PC-3 (cell line): ENCODE measurements at regions of chr3 and their contacts with region 1.

Region 1: DNA sequence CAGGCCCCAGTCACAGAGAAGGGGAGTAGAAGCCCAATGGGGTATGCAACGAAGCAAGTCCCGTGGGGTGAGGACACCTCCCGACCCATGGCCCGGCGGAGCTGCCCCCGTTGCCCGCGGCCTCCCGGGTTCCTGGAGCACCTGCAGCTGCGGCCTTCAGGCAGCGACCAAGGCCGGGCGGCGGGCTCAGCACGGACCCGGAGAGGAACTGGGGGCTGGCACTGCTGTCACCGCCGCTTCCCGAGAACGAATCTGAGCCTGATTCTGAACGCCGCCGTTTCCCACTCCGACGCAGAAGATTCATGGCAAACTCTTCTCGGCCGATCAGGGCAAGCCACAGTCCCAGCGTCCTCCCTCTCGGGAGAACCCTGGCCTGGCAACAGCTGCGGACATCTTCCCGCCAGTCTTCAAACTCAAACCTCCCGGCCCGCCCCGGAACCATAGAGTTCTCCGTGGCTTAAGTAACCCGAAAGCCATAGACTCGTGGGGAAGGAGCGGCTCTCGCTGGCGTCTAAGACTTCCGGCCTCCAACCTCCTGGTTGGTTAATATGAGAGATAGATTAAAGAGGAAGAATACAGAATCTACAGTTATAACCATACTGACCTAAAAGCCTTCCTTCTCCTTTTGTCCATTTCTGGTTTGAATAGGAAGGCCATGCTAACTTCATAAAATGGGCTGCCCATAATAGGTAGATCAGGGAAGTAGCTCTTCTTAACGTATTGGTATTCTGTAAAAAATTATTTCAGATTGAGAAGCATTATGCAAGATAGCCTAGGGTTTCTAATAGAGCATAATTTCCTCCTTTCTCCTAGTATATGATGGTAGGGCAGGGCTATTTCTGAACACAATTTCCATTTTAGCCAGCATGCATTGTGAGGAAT is at the start of gene POLQ:
- DNase-seq: peak; percentile 97
- ATAC-seq: peak; percentile 92
- H3K4me3 ChIP-seq: peak within 1 kb of the TSS; percentile 84
- H3K27ac ChIP-seq: no peak within 1 kb of the TSS
- H3K4me1 ChIP-seq: peaks cover 8% of the 10 kb centered on the region
- H3K27me3 ChIP-seq: no peaks in the 10 kb centered on the region
- CTCF ChIP-seq: no peak
- total RNA-seq, gene POLQ: 9.6 and 22.2 TPM in 2 replicates

Region 2: DNA sequence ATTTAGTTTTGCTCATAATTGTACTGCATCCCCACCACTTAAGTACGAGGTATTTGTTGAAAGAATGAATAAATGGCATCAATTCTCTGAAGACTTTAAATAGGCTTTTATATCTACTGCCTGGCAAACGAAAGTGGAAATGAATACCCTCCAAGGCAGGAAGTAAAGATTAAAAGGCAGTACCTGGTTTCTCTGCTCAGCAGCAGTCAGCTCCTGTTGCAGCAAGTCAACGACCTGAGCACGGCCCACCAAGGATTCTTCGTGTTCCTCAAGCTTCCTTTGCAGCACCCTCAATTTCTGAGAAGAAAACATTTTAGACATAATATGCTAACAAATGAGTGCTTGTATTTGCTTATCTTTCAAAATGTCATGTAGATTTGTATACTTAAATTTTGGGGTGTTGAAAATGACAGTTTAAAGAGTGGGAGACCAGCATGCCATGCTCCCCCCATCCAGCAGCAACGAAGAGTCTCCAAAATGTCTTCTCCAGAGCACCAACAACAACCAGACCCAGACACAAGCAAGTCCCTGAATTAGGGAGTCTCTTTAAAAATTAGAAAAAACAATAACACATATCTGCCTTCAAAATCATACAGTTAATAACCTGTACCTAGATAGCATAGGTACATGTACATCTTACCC is 172.5 kb after region 1 on chr3:
- CTCF ChIA-PET with region 1: no interaction called
- POLR2A ChIA-PET with region 1: no interaction called
- intact Hi-C with region 1: loop called (anchors 10 kb)
- DNase-seq: no peak
- ATAC-seq: no peak
- H3K4me3 ChIP-seq: no peak overlapping the region
- H3K27ac ChIP-seq: no peak overlapping the region
- H3K4me1 ChIP-seq: no peaks in the 10 kb centered on the region
- H3K27me3 ChIP-seq: no peaks in the 10 kb centered on the region
- CTCF ChIP-seq: no peak

Region 3: DNA sequence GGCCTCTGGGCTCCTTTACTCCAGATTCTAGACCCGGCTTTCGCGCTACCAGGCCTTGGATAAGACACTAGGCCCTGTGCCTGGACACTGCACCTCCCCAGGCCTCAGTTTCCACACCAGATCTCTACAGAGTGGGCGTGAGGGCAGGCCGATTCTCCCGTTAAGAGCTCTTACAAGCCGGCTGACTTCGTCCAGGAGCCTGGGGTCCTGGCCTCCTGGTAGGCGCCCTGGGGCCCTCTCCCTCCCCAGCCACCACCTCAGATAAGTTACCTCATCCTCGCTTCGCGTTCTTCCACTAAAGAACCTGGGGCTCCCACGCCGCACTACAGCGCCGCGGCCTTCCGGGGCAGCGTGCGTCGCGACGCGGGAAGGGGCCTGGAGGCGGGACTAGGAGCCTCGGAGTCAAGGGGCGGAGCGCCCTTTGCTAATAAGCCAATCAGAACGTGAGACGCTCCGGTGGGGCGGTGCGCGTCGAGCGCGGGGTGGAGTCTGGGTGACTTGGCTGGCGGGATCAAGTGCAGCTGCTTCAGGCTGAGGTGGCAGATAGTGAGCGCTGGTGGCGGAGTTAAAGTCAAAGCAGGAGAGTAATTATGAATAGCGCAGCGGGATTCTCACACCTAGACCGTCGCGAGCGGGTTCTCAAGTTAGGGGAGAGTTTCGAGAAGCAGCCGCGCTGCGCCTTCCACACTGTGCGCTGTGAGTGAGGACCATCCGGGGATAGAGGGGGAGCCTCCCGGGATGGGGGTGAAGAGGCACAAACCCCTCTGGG is 289.1 kb after region 1 on chr3 and contains the starts of genes EAF2 and IQCB1:
- CTCF ChIA-PET with region 1: no interaction called
- POLR2A ChIA-PET with region 1: no interaction called
- intact Hi-C with region 1: loop called (anchors 10 kb)
- DNase-seq: peak; percentile 99
- ATAC-seq: peak; percentile 99
- H3K4me3 ChIP-seq: peak within 1 kb of the TSS; percentile 81
- H3K27ac ChIP-seq: no peak within 1 kb of the TSS
- H3K4me1 ChIP-seq: peaks cover 16% of the 10 kb centered on the region
- H3K27me3 ChIP-seq: no peaks in the 10 kb centered on the region
- CTCF ChIP-seq: no peak
- total RNA-seq, gene EAF2: 2.8 and 8.6 TPM in 2 replicates
- total RNA-seq, gene IQCB1: 29.0 and 29.3 TPM in 2 replicates

Region 4: DNA sequence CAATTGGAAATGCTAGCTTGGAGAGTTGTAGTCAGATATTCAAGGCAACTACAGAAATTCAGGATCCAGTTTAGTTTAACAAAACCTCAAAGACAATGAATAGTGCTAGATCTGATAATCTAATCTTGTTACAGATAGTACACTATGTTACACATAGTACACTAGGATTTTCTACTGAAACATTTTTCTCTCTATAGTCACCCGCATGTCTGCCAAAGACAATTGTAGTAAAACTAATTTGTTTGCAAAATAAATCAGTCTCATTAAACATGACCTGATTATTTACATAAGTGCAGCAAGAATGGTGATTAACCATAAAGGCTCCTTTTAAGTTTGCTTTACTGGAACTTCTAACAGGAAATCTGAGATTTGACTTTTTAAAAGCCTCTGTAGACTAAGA is 424.2 kb after region 1 on chr3:
- CTCF ChIA-PET with region 1: no interaction called
- POLR2A ChIA-PET with region 1: no interaction called
- intact Hi-C with region 1: loop called (anchors 5 kb)
- DNase-seq: peak; percentile 97
- ATAC-seq: peak; percentile 89
- H3K4me3 ChIP-seq: peak overlapping the region; percentile 12; the same call in 1 of the 2 replicates
- H3K27ac ChIP-seq: peak overlapping the region; percentile 72
- H3K4me1 ChIP-seq: peaks cover 41% of the 10 kb centered on the region
- H3K27me3 ChIP-seq: no peaks in the 10 kb centered on the region
- CTCF ChIP-seq: no peak

Region 5: GRCh38 chr3:122112754-122113153 is 566.9 kb after region 1 on chr3:
- CTCF ChIA-PET with region 1: no interaction called
- POLR2A ChIA-PET with region 1: no interaction called
- intact Hi-C with region 1: loop called (anchors 1 kb)
- DNase-seq: peak; percentile 42
- ATAC-seq: peak; percentile 73
- H3K4me3 ChIP-seq: no peak overlapping the region
- H3K27ac ChIP-seq: no peak overlapping the region
- H3K4me1 ChIP-seq: no peaks in the 10 kb centered on the region
- H3K27me3 ChIP-seq: peaks cover 11% of the 10 kb centered on the region
- CTCF ChIP-seq: peak; percentile 41

Region 6: DNA sequence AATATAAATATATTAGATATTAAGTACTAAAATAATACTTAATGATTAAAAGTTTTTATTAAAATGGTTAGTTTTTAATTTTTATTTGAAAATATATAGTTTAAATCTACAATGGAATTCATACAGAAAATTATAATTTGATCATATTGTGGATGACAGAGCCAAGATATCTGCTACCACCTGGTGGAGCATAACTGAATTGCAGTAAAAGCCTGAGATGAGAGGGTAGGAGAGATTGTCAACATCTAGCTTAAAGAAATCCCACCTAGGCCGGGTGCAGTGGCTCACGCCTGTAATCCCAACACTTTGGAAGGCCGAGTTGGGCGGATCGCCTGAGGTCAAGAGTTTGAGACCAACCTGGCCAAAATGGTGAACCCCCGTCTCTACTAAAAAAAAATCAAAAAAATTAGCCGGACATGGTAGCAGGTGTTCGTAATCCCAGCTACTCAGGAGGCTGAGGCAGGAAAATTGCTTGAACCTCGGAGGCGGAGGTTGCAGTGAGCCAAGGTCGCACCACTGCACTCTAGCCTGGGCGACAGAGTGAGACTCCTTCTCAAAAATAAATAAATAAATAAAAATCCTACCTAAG is 754.2 kb after region 1 on chr3:
- CTCF ChIA-PET with region 1: interaction called, 6 read pairs
- POLR2A ChIA-PET with region 1: no interaction called
- intact Hi-C with region 1: loop called (anchors 1 kb)
- DNase-seq: peak; percentile 82
- ATAC-seq: peak; percentile 70
- H3K4me3 ChIP-seq: no peak overlapping the region
- H3K27ac ChIP-seq: no peak overlapping the region
- H3K4me1 ChIP-seq: peaks cover 6% of the 10 kb centered on the region
- H3K27me3 ChIP-seq: no peaks in the 10 kb centered on the region
- CTCF ChIP-seq: peak; percentile 70

Region 7: DNA sequence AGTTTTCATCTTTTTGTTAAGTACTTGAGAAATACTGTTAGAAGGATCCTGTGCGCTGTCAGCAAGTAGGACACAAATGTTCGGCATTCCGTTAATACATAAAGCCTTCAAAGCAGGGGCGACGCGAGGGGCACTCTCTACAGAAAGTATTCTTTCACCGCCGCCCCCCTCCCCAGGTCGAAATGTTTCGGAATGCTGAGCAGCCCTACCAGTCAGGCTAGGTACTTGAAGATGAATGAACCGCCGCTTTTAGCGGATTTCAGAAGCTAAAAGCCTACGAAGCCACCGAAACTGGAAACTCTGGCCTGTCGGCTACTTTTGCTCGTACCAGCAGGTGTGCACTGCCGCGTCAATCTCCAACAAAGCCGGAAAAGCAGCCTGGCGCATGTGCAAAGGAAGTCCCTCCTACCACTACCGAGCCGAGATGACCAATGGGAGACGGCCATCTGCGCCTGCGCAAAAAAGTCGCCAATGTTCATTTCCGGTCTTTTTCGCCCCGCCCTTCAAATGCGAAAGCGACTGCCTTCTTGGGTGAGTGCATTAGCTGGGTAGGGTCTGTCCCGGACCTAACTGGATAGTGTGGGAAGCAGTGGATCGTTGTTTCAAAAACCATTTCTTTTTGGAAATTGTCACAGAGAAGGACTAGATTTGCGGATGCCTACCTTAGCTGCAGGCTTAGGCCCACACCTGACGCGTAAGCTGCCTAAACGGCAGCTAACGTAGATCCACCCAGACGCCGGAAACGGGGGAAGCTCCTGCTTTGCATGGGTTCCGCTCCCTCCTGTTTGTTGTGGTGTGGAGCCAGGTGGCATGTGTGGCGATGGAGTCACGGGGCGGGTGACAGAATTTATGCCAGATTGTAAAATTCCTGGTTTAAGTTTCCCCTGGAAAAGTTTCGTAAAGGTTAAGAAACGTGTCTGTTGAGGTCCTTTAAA is 870.2 kb after region 1 on chr3 and contains the start of gene WDR5B:
- CTCF ChIA-PET with region 1: no interaction called
- POLR2A ChIA-PET with region 1: no interaction called
- intact Hi-C with region 1: loop called (anchors 1 kb)
- DNase-seq: peak; percentile 99
- ATAC-seq: peak; percentile 90
- H3K4me3 ChIP-seq: peak within 1 kb of the TSS; percentile 75
- H3K27ac ChIP-seq: peak within 1 kb of the TSS; percentile 74
- H3K4me1 ChIP-seq: peaks cover 27% of the 10 kb centered on the region
- H3K27me3 ChIP-seq: no peaks in the 10 kb centered on the region
- CTCF ChIP-seq: no peak
- total RNA-seq, gene WDR5B: 3.1 and 4.0 TPM in 2 replicates